ENCODE measurements at regions of chr19 and their contacts with region 1.

Region 1: GRCh38 chr19:35592226-35592625 is 6.3 kb downstream of the PMIS2 start:
- DNase-seq: peak; percentile 59
- H3K4me3 ChIP-seq: no peak overlapping the region
- H3K27ac ChIP-seq: no peak overlapping the region
- H3K4me1 ChIP-seq: peaks cover 5% of the 10 kb centered on the region
- CTCF ChIP-seq: peak; percentile 87

Region 2: GRCh38 chr19:35509861-35510625 is 82.2 kb before region 1 on chr19:
- CTCF ChIA-PET with region 1: no interaction called
- POLR2A ChIA-PET with region 1: no interaction called
- intact Hi-C with region 1: loop called (anchors 2 kb)
- DNase-seq: peak; percentile 68
- H3K4me3 ChIP-seq: no peak overlapping the region
- H3K27ac ChIP-seq: no peak overlapping the region
- H3K4me1 ChIP-seq: no peaks in the 10 kb centered on the region
- CTCF ChIP-seq: peak; percentile 92

Region 3: GRCh38 chr19:35545001-35545911 is 47.0 kb before region 1 on chr19 and contains the start of gene TMEM147:
- CTCF ChIA-PET with region 1: no interaction called
- POLR2A ChIA-PET with region 1: no interaction called
- intact Hi-C with region 1: loop called (anchors 1 kb)
- DNase-seq: peak; percentile 92
- H3K4me3 ChIP-seq: peak within 1 kb of the TSS; percentile 80
- H3K27ac ChIP-seq: peak within 1 kb of the TSS; percentile 4
- H3K4me1 ChIP-seq: peaks cover 28% of the 10 kb centered on the region
- CTCF ChIP-seq: no peak
- total RNA-seq, gene TMEM147: 83.2 and 85.8 TPM in 2 replicates

Region 4: GRCh38 chr19:35565016-35565856 is 27.0 kb before region 1 on chr19:
- CTCF ChIA-PET with region 1: no interaction called
- POLR2A ChIA-PET with region 1: no interaction called
- intact Hi-C with region 1: no loop called
- DNase-seq: no peak
- H3K4me3 ChIP-seq: no peak overlapping the region
- H3K27ac ChIP-seq: no peak overlapping the region
- H3K4me1 ChIP-seq: no peaks in the 10 kb centered on the region
- CTCF ChIP-seq: no peak